ENCODE measurements at regions of chr17 and their contacts with region 1.

Region 1: GRCh38 chr17:4161179-4161559 is 18.2 kb downstream of the CYB5D2 start:
- DNase-seq: no peak
- H3K4me3 Mint-ChIP-seq: no peak overlapping the region
- H3K27ac Mint-ChIP-seq: peak overlapping the region; percentile 43
- H3K4me1 Mint-ChIP-seq: peaks cover 16% of the 10 kb centered on the region
- H3K27me3 Mint-ChIP-seq: no peaks in the 10 kb centered on the region

Region 2: GRCh38 chr17:4175921-4176807 is 15.0 kb after region 1 on chr17:
- CTCF ChIA-PET with region 1: interaction called, 17 read pairs
- POLR2A ChIA-PET with region 1: interaction called, 3 read pairs
- DNase-seq: peak; percentile 57
- H3K4me3 Mint-ChIP-seq: peak overlapping the region; percentile 69
- H3K27ac Mint-ChIP-seq: peak overlapping the region; percentile 99
- H3K4me1 Mint-ChIP-seq: peaks cover 54% of the 10 kb centered on the region
- H3K27me3 Mint-ChIP-seq: no peaks in the 10 kb centered on the region

Region 3: GRCh38 chr17:4187076-4187475 is 25.9 kb after region 1 on chr17:
- CTCF ChIA-PET with region 1: no interaction called
- POLR2A ChIA-PET with region 1: no interaction called
- DNase-seq: no peak
- H3K4me3 Mint-ChIP-seq: no peak overlapping the region
- H3K27ac Mint-ChIP-seq: no peak overlapping the region
- H3K4me1 Mint-ChIP-seq: peaks cover 13% of the 10 kb centered on the region
- H3K27me3 Mint-ChIP-seq: no peaks in the 10 kb centered on the region